IMR-90 (cell line): ENCODE measurements at regions of chr22 and their contacts with region 1.

Region 1: GRCh38 chr22:43901976-43902643 is 10.3 kb upstream of the PNPLA5 start:
- DNase-seq: peak; percentile 97
- ATAC-seq: peak; percentile 86
- H3K4me3 ChIP-seq: no peak overlapping the region
- H3K27ac ChIP-seq: peak overlapping the region; percentile 89
- H3K4me1 ChIP-seq: peaks cover 41% of the 10 kb centered on the region
- H3K27me3 ChIP-seq: no peaks in the 10 kb centered on the region
- CTCF ChIP-seq: no peak
- POLR2A ChIP-seq: no peak
- RAD21 ChIP-seq: no peak

Region 2: DNA sequence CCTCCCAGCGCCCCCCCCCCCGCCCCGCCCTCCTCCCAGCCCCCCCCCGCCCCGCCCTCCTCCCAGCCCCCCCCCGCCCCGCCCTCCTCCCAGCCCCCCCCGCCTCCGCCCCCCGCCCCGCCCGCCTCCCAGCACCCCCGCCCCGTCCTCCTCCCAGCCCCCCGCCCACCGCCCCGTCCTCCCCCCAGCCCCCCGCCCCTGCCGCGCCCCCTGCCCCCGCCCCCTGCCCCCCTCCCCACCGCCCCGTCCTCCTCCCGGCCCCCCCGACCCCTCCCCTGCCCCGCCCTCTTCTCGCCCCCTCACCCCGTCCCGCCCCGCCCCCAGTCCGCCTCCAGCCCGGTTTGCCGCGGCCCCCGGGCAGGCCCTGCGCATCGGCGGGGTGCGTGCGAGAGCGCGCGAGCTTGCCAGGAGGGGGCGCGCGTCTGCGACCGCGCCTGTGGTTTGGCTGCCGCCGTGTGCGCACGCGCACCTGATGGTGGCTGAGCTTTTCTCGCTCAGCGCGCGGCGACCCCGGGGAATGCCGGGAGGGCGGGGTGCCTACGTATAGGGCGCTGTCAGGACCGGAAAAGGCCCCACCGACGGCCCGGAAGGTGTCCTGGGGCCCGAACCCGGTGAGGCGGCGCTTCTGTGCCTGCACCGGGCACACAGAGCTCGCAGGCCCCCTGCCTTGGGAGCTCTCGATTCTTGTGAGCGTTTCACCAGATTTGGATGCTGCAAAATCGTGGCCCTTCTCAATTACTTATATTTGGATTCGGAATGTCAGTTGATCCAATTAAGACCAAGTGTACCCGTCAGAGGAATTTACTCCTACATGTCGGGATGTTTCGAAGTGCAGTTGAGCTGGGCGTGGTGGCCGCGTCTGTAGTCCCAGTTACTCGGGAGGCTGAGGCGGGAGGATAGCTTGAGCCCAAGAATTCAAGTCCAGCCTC is 714.7 kb before region 1 on chr22:
- CTCF ChIA-PET with region 1: interaction called, 10 read pairs
- POLR2A ChIA-PET with region 1: no interaction called
- dilution Hi-C with region 1: no loop called
- in situ Hi-C with region 1: no loop called
- intact Hi-C with region 1: no loop called
- DNase-seq: peak; percentile 92
- ATAC-seq: peak; percentile 88
- H3K4me3 ChIP-seq: peak overlapping the region; percentile 47
- H3K27ac ChIP-seq: peak overlapping the region; percentile 81
- H3K4me1 ChIP-seq: peaks cover 11% of the 10 kb centered on the region
- H3K27me3 ChIP-seq: peaks cover 3% of the 10 kb centered on the region
- CTCF ChIP-seq: peak; percentile 91
- POLR2A ChIP-seq: peak; percentile 57; the same call in 1 of the 2 replicates
- RAD21 ChIP-seq: peak; percentile 37

Region 3: DNA sequence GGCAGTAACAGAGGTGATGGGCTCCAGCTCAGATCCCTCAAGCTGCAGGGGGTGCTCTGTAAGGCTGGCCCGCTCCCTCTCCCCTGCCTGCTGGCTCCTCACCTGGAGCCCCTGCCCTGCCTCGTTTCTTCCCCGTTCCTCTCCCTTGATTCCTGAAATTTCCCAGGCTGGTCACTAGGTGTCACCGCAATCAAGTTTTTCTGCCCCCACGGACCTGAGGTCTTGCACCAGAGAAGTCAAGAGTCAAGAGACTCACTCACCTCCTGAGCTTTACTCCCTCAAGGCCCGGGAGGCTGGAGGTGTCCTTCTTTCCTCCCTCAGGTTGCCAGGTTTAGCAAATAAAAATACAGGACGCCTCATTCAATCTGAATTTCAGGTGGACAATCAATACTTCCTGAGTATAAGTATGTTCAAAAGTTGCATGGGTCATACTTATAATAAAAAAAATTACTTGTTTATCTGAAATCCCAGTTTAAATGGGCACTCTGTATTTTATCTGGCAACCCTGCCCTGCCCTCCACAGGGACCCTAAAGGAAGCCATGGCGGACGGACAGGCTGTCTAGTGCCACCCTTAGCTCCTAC is 628.1 kb before region 1 on chr22:
- CTCF ChIA-PET with region 1: no interaction called
- POLR2A ChIA-PET with region 1: no interaction called
- dilution Hi-C with region 1: no loop called
- in situ Hi-C with region 1: no loop called
- intact Hi-C with region 1: loop called (anchors 10 kb)
- DNase-seq: peak; percentile 46
- ATAC-seq: peak; percentile 87
- H3K4me3 ChIP-seq: no peak overlapping the region
- H3K27ac ChIP-seq: no peak overlapping the region
- H3K4me1 ChIP-seq: peaks cover 2% of the 10 kb centered on the region; the same call in 1 of the 2 replicates
- H3K27me3 ChIP-seq: peaks cover 22% of the 10 kb centered on the region
- CTCF ChIP-seq: peak; percentile 72
- POLR2A ChIP-seq: no peak
- RAD21 ChIP-seq: peak; percentile 76

Region 4: DNA sequence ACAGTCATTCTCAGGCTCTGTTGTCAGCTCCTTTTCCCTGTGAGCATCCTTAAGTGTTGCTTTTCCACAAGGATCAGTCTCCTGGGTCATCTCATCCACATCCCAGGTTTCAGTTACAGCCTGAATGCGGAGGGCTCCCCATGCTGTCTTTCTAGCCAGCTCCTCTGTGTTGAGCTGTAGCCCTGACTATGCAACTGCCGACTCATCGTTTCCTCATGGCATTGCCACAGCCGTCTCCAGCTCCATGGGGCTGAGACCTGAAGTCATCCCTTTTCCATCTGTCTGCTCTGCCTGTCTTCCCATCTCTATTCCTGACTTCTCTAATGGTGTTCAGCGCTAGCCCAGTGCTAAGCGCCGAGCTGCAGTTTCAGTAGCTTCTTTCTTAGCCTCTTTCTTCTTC is 65.0 kb after region 1 on chr22:
- CTCF ChIA-PET with region 1: no interaction called
- POLR2A ChIA-PET with region 1: interaction called, 15 read pairs
- dilution Hi-C with region 1: no loop called
- in situ Hi-C with region 1: no loop called
- intact Hi-C with region 1: no loop called
- DNase-seq: no peak
- ATAC-seq: no peak
- H3K4me3 ChIP-seq: no peak overlapping the region
- H3K27ac ChIP-seq: no peak overlapping the region
- H3K4me1 ChIP-seq: no peaks in the 10 kb centered on the region
- H3K27me3 ChIP-seq: no peaks in the 10 kb centered on the region
- CTCF ChIP-seq: no peak
- POLR2A ChIP-seq: no peak
- RAD21 ChIP-seq: no peak